K562 (cell line): ENCODE measurements at regions of chr6 and their contacts with region 1.

Region 1: DNA sequence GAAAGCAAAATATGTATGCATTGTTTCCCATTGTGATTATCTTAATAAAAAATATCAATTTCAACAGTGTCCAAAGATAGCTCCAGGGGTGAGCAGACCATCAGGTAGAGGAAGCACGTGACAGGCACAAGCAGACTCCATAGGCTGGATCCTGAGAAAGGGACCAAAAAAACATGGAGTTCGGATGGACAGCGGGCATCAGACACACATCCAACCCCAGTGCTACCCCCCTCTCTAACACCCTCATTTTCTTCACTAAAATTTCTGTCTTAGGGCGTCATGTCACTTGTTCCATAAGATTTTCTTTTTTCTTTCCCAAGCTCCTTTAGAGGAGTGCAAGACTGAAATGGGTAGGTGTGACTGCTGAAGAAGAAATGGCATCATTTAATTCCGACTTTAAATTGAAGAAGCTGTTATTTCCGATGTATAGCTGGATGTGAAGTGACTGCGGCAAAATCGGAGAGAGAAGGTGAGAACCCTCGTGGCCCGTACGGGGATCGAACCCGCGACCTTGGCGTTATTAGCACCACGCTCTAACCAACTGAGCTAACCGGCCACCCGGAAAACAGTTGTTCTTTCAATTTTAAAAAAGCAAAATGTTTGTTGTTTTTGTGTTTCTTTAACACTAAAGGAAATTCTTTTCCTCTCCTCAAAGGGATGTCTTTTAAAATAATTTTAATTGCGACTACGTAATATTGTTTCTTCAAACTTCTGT is 10.3 kb upstream of the PRSS16 start:
- DNase-seq: peak; percentile 72 to 91 (median 74)
- ATAC-seq: peak; percentile 79
- H3K4me3 ChIP-seq: peak overlapping the region; percentile 20; the same call in 1 of the 2 replicates
- H3K27ac ChIP-seq: peak overlapping the region; percentile 49; the same call in 2 of the 3 replicates
- H3K4me1 ChIP-seq: peaks cover 0 to 8% of the 10 kb centered on the region in 2 experiments; a peak in 1 of 5 replicates
- H3K27me3 ChIP-seq: no peaks in the 10 kb centered on the region
- CTCF ChIP-seq: no peak
- EP300 ChIP-seq: 0 out of 2 replicates have a peak, but pooled peaks have one; percentile 30
- POLR2A ChIP-seq: no peak
- RAD21 ChIP-seq: no peak

Region 2: DNA sequence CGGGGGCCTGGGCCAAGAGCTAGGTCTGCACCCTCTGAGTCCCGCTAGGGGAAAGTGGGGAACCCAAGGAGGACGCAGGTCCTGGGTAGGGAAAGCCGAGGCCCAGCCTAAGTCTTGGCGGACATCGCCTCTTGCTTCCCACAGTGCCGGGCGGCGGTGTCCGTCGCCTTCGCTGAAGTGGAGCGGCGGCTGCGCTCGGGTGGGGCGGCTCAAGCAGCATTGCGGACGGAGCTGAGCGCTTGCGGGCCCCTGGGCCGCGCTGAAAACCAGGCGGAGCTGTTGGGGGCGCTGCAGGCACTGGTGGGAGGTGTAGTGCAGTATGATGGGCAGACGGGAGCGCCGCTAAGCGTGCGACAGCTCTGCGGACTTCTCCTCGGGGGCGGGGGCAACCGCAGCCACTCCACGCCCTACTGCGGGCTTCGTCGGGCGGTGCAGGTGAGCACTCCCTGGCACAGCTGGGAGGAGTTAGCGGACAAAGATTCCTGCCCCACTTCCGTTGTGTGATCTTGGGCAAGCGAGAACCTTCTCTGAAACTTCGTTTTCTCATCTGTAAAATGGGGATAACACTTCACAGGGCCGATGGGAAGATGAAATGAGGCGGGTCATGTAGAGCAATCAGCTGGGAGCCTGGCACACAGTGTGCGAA is 14.5 kb after region 1 on chr6:
- CTCF ChIA-PET with region 1: no interaction called
- POLR2A ChIA-PET with region 1: interaction called, 21 read pairs
- in situ Hi-C with region 1: no loop called
- intact Hi-C with region 1: no loop called
- DNase-seq: peak; percentile 93 to 97 (median 95)
- ATAC-seq: peak; percentile 94
- H3K4me3 ChIP-seq: peak overlapping the region; percentile 89
- H3K27ac ChIP-seq: peak overlapping the region; percentile 81
- H3K4me1 ChIP-seq: peaks cover 25 to 30% of the 10 kb centered on the region in 2 experiments; a peak in 4 of 5 replicates
- H3K27me3 ChIP-seq: no peaks in the 10 kb centered on the region
- CTCF ChIP-seq: peak; percentile 87 to 98 (median 95)
- EP300 ChIP-seq: peak; percentile 3; the same call in 1 of the 2 replicates
- POLR2A ChIP-seq: peak; percentile 80
- RAD21 ChIP-seq: peak; percentile 71 to 79

Region 3: GRCh38 chr6:27290065-27290849 is 53.0 kb after region 1 on chr6:
- CTCF ChIA-PET with region 1: no interaction called
- POLR2A ChIA-PET with region 1: interaction called, 4 read pairs
- in situ Hi-C with region 1: no loop called
- intact Hi-C with region 1: loop called (anchors 2 kb)
- DNase-seq: peak; percentile 68 to 95 (median 77)
- ATAC-seq: peak; percentile 71
- H3K4me3 ChIP-seq: peak overlapping the region; percentile 29
- H3K27ac ChIP-seq: peak overlapping the region; percentile 70
- H3K4me1 ChIP-seq: peaks cover 17 to 25% of the 10 kb centered on the region in 2 experiments; a peak in 3 of 5 replicates
- H3K27me3 ChIP-seq: no peaks in the 10 kb centered on the region
- CTCF ChIP-seq: no peak; a peak in 1 of 6 replicates
- EP300 ChIP-seq: peak; percentile 83
- POLR2A ChIP-seq: 0 out of 2 replicates have a peak, but pooled peaks have one; percentile 55
- RAD21 ChIP-seq: no peak

Region 4: DNA sequence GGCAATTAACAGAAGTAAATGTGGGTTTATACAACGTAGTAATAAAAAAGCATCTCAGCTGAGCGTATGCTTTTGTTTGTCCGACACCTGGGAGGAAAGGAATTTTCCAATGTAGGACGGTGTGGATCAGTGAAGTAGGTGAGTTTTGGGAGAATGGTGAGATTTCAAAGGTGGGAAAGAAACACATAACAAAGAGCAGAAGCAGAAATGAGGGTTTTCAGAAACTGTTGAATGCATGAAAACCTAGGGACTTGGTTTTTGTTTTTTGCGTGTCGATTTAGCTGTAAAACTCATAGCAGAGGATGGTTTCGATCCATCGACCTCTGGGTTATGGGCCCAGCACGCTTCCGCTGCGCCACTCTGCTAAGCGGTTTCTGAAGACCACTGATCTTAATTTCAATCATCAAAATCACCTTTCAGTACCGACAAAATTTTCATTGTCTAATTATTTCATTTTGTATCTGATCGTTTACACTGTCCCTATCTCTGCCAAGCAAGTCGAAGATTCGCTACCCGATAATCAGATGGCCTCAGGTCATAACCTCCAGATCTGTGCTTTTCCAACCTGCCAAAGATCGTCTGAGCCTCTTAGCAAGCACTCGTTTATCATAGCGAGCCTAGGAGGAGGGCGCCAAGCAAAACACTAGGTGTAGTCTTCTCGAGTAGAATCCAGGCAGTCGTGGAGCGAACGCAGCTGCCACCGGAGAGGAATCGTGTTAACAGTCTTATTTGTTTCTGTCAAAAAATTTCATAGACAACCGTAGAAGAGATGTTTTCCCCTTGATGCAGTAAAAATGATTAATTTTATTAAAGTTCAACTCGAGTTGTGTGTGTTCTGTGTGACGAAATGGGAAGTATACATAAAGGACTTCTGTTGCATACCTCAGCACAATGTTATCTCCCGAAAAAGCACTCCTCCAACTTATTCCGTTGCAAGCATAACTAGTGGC is 95.7 kb after region 1 on chr6:
- CTCF ChIA-PET with region 1: no interaction called
- POLR2A ChIA-PET with region 1: interaction called, 5 read pairs
- in situ Hi-C with region 1: no loop called
- intact Hi-C with region 1: loop called (anchors 5 kb)
- DNase-seq: peak; percentile 67 to 91 (median 78)
- ATAC-seq: peak; percentile 92
- H3K4me3 ChIP-seq: peak overlapping the region; percentile 64
- H3K27ac ChIP-seq: peak overlapping the region; percentile 82
- H3K4me1 ChIP-seq: peaks cover 0 to 5% of the 10 kb centered on the region in 2 experiments; a peak in 2 of 5 replicates
- H3K27me3 ChIP-seq: no peaks in the 10 kb centered on the region
- CTCF ChIP-seq: peak in 1 of 3 experiments; percentile 18; a peak in 1 of 6 replicates
- EP300 ChIP-seq: peak; percentile 71
- POLR2A ChIP-seq: no peak
- RAD21 ChIP-seq: no peak; a peak in 2 of 4 replicates

Region 5: DNA sequence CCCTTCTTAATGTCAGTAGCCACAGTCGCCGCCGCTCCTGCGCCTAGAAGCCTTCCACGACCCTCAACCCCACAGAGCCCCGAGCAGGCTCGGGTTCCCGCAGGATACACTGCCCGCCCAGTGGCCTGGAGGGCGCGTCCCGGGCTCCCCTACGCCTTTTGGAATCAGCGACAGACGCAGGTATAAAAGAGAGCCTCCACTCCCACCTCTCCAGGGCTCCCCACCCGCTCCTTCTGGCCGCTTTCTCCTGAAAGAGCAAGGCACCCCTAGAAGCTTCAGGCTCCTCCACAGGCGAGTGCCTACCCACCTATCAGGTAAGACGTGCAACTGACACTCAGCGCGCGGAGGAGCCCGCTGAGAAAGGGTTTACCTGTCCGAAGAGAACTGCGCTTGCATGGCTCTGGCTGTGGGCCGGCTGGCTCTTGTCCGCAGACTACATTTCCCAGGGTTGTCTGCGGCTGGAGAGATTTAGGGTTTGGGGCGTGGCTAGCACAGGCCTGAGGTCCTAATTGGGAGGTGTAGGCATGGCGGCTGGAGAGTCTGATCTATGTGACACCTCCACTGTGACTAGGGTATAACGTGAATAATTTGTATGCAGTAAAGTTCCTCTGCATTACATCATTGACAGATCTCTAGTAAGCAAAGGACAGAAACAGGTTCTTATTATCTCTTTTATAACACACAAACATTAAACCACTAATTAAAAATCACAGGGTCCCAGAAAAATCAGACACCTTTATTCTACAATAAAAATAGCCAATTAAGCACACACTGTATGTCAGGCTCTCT is 137.8 kb after region 1 on chr6:
- CTCF ChIA-PET with region 1: no interaction called
- POLR2A ChIA-PET with region 1: interaction called, 3 read pairs
- in situ Hi-C with region 1: no loop called
- intact Hi-C with region 1: loop called (anchors 5 kb)
- DNase-seq: peak; percentile 88 to 95 (median 90)
- ATAC-seq: peak; percentile 99
- H3K4me3 ChIP-seq: peak overlapping the region; percentile 66
- H3K27ac ChIP-seq: peak overlapping the region; percentile 70
- H3K4me1 ChIP-seq: peaks cover 3 to 10% of the 10 kb centered on the region in 2 experiments; a peak in 3 of 5 replicates
- H3K27me3 ChIP-seq: no peaks in the 10 kb centered on the region
- CTCF ChIP-seq: 0 out of 6 replicates have a peak, but pooled peaks of 1 of the 3 experiments have one; percentile 3
- EP300 ChIP-seq: no peak
- POLR2A ChIP-seq: peak; percentile 62; the same call in 1 of the 2 replicates
- RAD21 ChIP-seq: no peak

Region 6: DNA sequence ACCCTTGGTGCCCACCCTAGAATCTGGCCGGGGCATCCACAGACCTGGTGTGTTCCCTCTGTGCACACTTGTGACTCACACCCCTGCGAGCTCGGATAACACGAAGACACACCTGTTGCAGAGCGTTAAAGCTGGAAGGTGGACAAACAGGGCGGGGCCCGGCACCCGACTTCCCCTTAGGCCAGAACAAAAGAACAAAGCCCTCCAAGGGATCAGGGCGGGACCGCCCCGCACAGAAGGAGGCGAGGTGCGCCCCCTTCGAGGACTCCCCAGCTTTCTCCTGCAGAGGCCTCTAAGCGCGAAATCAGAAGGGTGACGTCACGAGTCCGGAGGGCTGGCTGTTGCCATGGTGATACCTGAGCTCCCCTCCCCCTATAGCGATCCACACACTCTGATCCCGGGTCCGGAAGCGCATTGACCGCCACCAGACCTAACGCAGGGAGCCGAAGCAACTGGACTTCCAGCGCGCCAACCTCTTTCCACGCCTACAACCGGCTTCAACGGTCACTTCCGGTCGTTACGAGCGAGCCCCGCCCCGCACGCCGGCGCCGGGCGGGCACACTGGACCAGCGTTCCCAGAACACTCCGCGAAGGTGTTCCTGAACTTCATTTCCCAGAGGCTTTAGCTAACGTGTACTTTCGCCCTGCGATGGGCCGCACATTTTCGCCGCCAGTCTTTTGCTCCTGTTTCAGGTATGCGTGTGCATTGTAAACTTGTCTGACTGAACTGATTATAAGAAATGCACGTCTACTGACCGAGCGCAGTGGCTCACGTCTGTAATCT is 235.6 kb after region 1 on chr6 and contains the start of gene ZNF184:
- CTCF ChIA-PET with region 1: no interaction called
- POLR2A ChIA-PET with region 1: interaction called, 3 read pairs
- in situ Hi-C with region 1: no loop called
- intact Hi-C with region 1: loop called (anchors 2 kb)
- DNase-seq: peak; percentile 97 to 100 (median 98)
- ATAC-seq: peak; percentile 91
- H3K4me3 ChIP-seq: peak within 1 kb of the TSS; percentile 75
- H3K27ac ChIP-seq: peak within 1 kb of the TSS; percentile 91
- H3K4me1 ChIP-seq: peaks cover 8 to 11% of the 10 kb centered on the region in 2 experiments; a peak in 4 of 5 replicates
- H3K27me3 ChIP-seq: no peaks in the 10 kb centered on the region
- CTCF ChIP-seq: peak; percentile 31 to 42 (median 37); a peak in 5 of 6 replicates
- EP300 ChIP-seq: peak; percentile 92
- POLR2A ChIP-seq: peak; percentile 92
- RAD21 ChIP-seq: peak; percentile 10 to 18; a peak in 2 of 4 replicates
- polyA plus RNA-seq, gene ZNF184: 7.6 to 12.8 TPM